Naive thymus-derived CD4-positive, alpha-beta T cell (primary cell): ENCODE measurements at regions of chr12 and their contacts with region 1.

Region 1: GRCh38 chr12:11778713-11779685 is 129.5 kb downstream of the ETV6 start:
- DNase-seq: no peak
- ATAC-seq: no peak
- H3K4me3 ChIP-seq: no peak overlapping the region
- H3K4me3 Mint-ChIP-seq: peak overlapping the region in 1 of 10 donors; percentile 70
- H3K27ac ChIP-seq: no peak overlapping the region
- H3K27ac Mint-ChIP-seq: peak overlapping the region in 1 of 9 donors; percentile 11
- H3K4me1 ChIP-seq: no peaks in the 10 kb centered on the region
- H3K4me1 Mint-ChIP-seq: peaks cover 29 to 82% (median 33%) of the 10 kb centered on the region in 7 donors
- H3K27me3 ChIP-seq: no peaks in the 10 kb centered on the region
- H3K27me3 Mint-ChIP-seq: no peaks in the 10 kb centered on the region

Region 2: DNA sequence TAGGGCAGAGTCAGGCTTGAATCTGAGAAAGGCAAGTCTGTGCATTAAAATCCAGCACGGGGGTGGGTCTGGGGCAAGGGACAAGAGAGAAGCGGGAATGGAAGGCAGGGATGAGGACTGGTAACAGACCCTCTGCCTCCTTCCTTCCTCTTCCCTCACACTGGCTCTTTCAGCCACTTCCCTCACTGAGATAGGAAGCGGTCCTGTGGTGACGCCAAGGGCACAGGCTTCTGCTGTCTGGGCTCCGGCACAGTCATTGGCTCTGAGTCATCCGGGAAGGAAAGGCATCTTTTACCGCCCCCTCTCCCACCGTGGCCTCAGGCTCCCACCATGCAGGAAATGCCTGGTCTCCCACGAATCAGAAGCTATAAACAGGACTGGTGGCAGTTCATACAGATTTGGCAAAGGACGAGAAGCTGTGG is 59.3 kb before region 1 on chr12:
- CTCF ChIA-PET with region 1: no interaction called
- POLR2A ChIA-PET with region 1: no interaction called
- intact Hi-C with region 1: no loop called
- DNase-seq: peak in 1 of 9 donors; percentile 59
- ATAC-seq: peak; percentile 88
- H3K4me3 ChIP-seq: no peak overlapping the region
- H3K4me3 Mint-ChIP-seq: no peak overlapping the region
- H3K27ac ChIP-seq: no peak overlapping the region
- H3K27ac Mint-ChIP-seq: no peak overlapping the region
- H3K4me1 ChIP-seq: no peaks in the 10 kb centered on the region
- H3K4me1 Mint-ChIP-seq: peaks cover 12 to 57% (median 24%) of the 10 kb centered on the region in 7 donors
- H3K27me3 ChIP-seq: no peaks in the 10 kb centered on the region
- H3K27me3 Mint-ChIP-seq: no peaks in the 10 kb centered on the region

Region 3: DNA sequence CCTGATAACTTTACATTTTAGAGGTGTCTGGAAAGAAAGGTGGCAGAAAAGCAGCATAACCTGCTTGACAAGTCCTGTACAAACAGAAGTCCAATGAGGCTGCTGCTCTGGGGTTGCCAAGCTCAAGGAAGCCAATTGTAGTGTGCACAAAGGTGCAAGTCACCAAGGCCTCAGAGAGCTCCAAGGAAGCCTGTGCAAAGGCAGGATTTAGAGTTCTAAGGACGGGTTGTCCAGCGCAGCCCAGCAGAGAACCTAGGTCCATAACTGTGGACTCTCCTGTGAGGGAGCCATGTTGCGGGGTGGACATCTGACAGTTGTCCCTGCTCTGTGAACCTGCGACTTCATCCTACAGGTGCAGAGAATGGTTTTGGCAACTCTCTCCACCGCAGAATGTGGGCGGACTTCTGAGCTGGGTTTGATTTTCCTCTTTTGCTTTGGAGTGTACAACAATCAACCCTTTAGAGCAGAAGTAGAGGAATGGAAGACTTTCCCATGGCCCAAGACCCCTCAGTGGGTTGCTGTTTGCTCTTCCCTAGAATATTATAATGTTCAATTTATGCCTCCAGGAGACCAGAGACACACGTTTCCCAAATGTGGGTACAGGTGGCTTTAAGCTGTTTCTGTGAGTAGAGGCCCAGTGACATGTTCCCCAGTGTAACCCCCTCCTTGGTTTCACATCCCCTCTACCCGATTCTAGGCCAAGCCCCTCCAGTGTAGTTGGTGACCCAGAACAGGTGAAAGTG is 48.5 kb before region 1 on chr12:
- CTCF ChIA-PET with region 1: no interaction called
- POLR2A ChIA-PET with region 1: no interaction called
- intact Hi-C with region 1: no loop called
- DNase-seq: no peak
- ATAC-seq: peak; percentile 21
- H3K4me3 ChIP-seq: no peak overlapping the region
- H3K4me3 Mint-ChIP-seq: peak overlapping the region; percentile 39 to 90 (median 71)
- H3K27ac ChIP-seq: peak overlapping the region; percentile 34
- H3K27ac Mint-ChIP-seq: peak overlapping the region; percentile 81 to 98 (median 91)
- H3K4me1 ChIP-seq: peaks cover 25 to 60% of the 10 kb centered on the region in 2 donors
- H3K4me1 Mint-ChIP-seq: peaks cover 61 to 86% (median 76%) of the 10 kb centered on the region in 7 donors
- H3K27me3 ChIP-seq: no peaks in the 10 kb centered on the region
- H3K27me3 Mint-ChIP-seq: no peaks in the 10 kb centered on the region

Region 4: GRCh38 chr12:11793921-11794710 is 15.1 kb after region 1 on chr12:
- CTCF ChIA-PET with region 1: no interaction called
- POLR2A ChIA-PET with region 1: interaction called, 3 read pairs
- intact Hi-C with region 1: loop called in 1 of 2 experiments (anchors 2 kb)
- DNase-seq: no peak
- ATAC-seq: no peak
- H3K4me3 ChIP-seq: no peak overlapping the region
- H3K4me3 Mint-ChIP-seq: no peak overlapping the region
- H3K27ac ChIP-seq: no peak overlapping the region
- H3K27ac Mint-ChIP-seq: no peak overlapping the region
- H3K4me1 ChIP-seq: peaks cover 0 to 5% of the 10 kb centered on the region in 2 donors
- H3K4me1 Mint-ChIP-seq: peaks cover 29 to 59% (median 49%) of the 10 kb centered on the region in 7 donors
- H3K27me3 ChIP-seq: no peaks in the 10 kb centered on the region
- H3K27me3 Mint-ChIP-seq: no peaks in the 10 kb centered on the region